HEK293 (cell line): ENCODE measurements at regions of chr11 and their contacts with region 1.

Region 1: DNA sequence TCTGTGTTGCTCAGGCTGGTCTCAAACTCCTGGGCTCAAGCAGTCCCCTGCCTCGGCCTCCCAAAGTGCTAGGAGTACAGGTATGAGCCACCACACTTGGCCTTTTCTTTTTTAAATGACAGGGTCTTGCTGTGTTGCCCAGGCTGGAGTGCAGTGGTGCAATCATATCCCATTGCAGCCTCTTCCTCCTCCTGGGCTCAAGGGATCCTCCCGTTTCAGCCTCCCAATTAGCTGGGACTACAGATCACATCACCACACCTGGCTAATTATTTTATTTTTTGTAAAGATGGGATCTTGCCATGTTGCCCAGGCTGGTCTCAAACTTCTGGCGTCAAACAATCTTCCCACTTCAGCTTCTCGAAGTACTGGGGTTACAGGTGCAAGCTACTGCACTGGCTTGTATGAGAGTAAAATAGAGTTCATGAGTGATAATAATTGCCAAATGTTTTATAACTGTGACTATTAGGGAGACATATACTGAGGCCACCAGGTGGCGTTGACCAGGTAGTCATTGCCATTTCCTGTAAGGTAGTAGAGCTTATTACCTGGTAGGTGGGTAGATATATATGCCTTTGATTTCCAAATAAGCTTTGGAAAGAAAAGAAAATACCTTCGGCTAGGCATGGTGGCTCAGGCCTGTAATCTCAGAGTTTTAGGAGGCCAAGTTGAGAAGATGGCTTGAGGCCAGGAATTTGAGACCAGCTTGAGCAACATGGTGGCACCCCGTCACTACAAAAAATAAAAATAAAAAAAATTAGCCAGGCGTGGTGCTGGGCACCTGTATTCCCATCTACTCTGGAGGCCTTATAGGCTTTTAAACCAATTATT is 5.4 kb downstream of the FDX1 start:
- H3K4me3 ChIP-seq: no peak overlapping the region
- H3K27ac ChIP-seq: no peak overlapping the region
- H3K4me1 ChIP-seq: no peaks in the 10 kb centered on the region; the same call in 1 of the 2 replicates
- CTCF ChIP-seq: no peak

Region 2: DNA sequence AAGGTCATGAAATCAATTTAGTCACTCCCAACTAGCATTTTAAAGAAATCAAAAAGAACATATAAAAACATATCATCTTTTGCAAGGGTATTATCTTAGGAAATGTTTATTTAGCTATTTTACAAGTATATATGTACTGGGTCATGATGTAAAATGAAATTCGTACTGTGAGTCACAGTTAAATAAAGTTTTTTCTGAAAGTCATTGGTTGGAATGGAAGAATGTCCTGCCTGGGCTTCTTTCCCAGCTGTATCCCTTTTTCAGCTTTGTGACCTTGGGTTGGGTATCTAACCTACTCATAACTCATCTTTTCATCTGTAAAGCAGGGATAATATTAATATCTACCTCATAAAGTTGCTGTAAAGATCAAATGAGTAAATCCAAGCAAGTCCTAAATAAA is 10.3 kb after region 1 on chr11:
- CTCF ChIA-PET with region 1: interaction called, 10 read pairs
- POLR2A ChIA-PET with region 1: no interaction called
- H3K4me3 ChIP-seq: no peak overlapping the region
- H3K27ac ChIP-seq: no peak overlapping the region
- H3K4me1 ChIP-seq: no peaks in the 10 kb centered on the region
- CTCF ChIP-seq: no peak

Region 3: GRCh38 chr11:110655967-110656366 is 220.8 kb after region 1 on chr11:
- CTCF ChIA-PET with region 1: no interaction called
- POLR2A ChIA-PET with region 1: no interaction called
- H3K4me3 ChIP-seq: no peak overlapping the region
- H3K27ac ChIP-seq: no peak overlapping the region
- H3K4me1 ChIP-seq: no peaks in the 10 kb centered on the region
- CTCF ChIP-seq: no peak